ENCODE measurements at regions of chr16 and their contacts with region 1.

Region 1: GRCh38 chr16:88662843-88663606 is at the start of gene MVD:
- DNase-seq: peak; percentile 99
- H3K4me3 ChIP-seq: peak within 1 kb of the TSS; percentile 77 to 81 (median 78)
- H3K27ac ChIP-seq: peak within 1 kb of the TSS; percentile 52
- H3K4me1 ChIP-seq: peaks cover 20% of the 10 kb centered on the region
- H3K27me3 ChIP-seq: no peaks in the 10 kb centered on the region
- CTCF ChIP-seq: no peak
- POLR2A ChIP-seq: peak; percentile 93
- total RNA-seq, gene MVD: 117 and 142 TPM in 2 replicates

Region 2: DNA sequence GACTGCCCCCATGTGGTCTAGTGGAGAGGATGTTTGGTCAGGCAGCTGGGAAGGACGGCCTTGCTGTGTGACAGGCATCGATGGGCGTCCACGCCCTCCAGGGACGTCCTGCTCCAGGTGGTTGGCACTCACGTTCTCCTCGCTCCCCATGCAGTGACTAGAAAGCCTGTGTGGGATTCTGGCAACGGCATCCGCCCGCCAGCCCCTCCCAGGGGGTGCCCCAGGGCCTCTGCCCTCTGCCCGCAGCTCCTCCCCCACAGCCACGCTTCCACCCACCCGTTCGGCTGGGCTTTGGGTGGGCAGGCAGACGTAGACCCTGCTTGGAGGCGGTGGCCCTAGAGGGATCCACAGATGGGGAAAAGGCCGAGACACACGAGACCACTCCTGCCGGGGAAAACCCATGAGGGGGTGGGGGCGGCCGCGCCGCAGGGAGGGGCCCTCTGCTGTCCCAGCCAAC is 29.3 kb before region 1 on chr16:
- CTCF ChIA-PET with region 1: no interaction called
- POLR2A ChIA-PET with region 1: no interaction called
- dilution Hi-C with region 1: no loop called
- intact Hi-C with region 1: loop called (anchors 2 kb)
- DNase-seq: peak; percentile 7
- H3K4me3 ChIP-seq: peak overlapping the region in 1 of 3 experiments; percentile 38
- H3K27ac ChIP-seq: no peak overlapping the region
- H3K4me1 ChIP-seq: peaks cover 8% of the 10 kb centered on the region
- H3K27me3 ChIP-seq: peaks cover 0 to 5% of the 10 kb centered on the region in 2 experiments
- CTCF ChIP-seq: peak in 1 of 2 donors; percentile 43
- POLR2A ChIP-seq: no peak

Region 3: DNA sequence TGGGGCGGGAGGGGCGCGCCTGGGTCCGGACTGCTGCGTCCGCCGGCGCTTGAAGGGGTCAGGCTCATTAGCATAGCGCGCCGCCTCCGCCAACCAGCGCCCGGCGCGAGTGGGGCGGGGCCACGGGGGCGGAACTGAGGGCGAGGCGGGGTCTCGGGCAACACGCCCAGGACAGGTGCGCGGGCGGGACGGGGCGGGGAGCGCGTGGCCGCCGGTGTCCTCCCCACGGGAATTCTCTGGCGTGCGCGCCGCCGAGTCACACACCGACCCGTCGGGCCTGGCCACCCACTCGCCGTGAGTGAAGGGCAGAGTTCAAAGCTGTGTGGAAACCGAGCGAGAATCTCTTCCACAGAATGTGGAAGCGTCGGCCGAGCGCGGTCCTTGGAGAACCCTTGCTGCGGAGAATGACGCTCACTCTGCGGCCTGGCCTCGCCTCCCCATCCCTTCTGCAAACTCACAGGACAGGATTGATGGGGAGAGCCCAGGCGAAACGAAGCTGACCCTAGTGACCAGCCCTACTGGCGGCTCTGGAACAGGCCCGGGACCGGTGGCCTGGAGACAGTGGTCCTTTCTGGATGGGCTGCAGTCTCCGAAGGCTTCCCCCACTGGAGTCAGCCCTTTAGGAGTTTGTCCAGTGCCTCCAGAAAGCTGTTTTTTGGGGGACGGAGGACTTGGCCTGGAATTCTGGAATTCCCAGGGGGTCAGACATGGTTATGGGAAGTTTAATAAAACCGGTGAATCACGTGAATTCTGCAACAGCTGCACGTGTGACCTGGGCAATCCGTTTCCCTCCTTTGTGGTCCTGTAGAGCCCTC is 23.6 kb after region 1 on chr16 and contains the start of gene SNAI3:
- CTCF ChIA-PET with region 1: interaction called, 8 read pairs
- POLR2A ChIA-PET with region 1: no interaction called
- dilution Hi-C with region 1: no loop called
- intact Hi-C with region 1: loop called (anchors 2 kb)
- DNase-seq: peak; percentile 60
- H3K4me3 ChIP-seq: peak within 1 kb of the TSS; percentile 29 to 57 (median 40)
- H3K27ac ChIP-seq: no peak within 1 kb of the TSS
- H3K4me1 ChIP-seq: peaks cover 2% of the 10 kb centered on the region
- H3K27me3 ChIP-seq: peaks cover 0 to 2% of the 10 kb centered on the region in 2 experiments
- CTCF ChIP-seq: no peak
- POLR2A ChIP-seq: peak; percentile 57
- total RNA-seq, gene SNAI3: 0.18 and 0.31 TPM in 2 replicates

Region 4: DNA sequence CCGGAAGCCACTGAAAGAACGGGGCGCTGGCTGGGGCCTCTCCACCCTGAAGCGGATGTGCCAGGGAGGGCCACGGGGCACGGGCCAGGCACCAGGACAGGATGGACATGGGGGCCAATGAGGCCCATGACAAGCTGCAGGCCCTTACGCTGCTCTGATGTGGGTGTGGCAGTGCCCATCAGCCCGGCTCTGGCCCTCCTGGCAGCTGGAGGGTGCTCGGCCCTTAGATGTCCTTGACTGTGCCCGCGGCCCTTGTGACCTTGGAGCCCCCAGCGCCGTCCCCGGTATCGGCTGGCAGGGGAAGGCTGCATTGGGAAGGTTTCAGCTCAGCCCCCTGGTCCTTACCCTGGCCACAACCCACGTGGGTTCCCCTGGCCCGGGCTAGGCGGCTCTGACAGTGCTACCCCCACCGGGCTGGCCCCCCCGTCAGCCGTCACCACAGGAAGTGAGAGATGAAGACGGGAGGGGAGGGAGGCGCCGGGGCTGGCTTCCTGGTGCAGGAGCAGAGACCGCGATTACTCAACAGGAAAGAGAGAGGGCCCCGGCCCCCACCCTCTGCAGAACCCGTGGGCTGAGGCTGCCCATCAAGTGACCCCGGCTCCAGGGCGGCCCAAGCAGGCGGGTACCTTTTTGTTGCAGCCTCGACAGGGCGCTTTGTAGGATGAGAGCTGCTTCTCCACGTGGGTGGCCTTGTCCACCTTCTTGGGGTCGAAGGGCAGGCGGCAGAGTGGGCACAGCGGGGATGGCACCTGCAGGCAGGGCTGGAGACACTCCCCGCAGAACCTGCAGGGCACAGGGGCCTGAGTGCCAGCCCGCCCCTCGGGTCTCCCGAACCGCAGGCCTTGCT is 37.8 kb after region 1 on chr16:
- CTCF ChIA-PET with region 1: interaction called, 4 read pairs
- POLR2A ChIA-PET with region 1: interaction called, 4 read pairs
- dilution Hi-C with region 1: no loop called
- intact Hi-C with region 1: loop called (anchors 2 kb)
- DNase-seq: peak; percentile 95
- H3K4me3 ChIP-seq: no peak overlapping the region
- H3K27ac ChIP-seq: peak overlapping the region; percentile 69
- H3K4me1 ChIP-seq: peaks cover 52% of the 10 kb centered on the region
- H3K27me3 ChIP-seq: no peaks in the 10 kb centered on the region
- CTCF ChIP-seq: no peak
- POLR2A ChIP-seq: no peak